Left lung (tissue), 14 donors: ENCODE measurements at regions of chr18 and their contacts with region 1.

Region 1: DNA sequence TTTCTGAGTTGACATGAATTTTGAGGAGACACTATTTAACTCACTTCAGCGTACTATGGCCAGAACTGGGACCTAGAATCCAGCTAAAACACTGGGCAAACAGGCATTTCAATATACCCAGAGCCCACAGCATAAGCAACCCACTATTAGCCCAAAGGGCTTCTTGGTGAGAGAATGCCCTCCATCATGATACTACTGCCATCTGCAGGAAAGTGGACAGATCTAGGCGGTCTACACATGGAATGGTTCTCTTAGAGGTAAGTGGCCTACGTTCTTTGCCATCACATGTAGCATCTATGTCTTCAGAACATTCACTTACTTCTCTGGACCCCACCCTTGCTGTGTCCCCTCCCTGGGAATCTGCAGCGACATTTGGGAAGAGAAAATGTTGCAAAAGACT is 181.3 kb upstream of the LINC00305 start:
- DNase-seq: no peak
- ATAC-seq: no peak
- H3K4me3 ChIP-seq: no peak overlapping the region
- H3K27ac ChIP-seq: no peak overlapping the region
- H3K4me1 ChIP-seq: no peaks in the 10 kb centered on the region
- H3K27me3 ChIP-seq: no peaks in the 10 kb centered on the region
- CTCF ChIP-seq: no peak

Region 2: DNA sequence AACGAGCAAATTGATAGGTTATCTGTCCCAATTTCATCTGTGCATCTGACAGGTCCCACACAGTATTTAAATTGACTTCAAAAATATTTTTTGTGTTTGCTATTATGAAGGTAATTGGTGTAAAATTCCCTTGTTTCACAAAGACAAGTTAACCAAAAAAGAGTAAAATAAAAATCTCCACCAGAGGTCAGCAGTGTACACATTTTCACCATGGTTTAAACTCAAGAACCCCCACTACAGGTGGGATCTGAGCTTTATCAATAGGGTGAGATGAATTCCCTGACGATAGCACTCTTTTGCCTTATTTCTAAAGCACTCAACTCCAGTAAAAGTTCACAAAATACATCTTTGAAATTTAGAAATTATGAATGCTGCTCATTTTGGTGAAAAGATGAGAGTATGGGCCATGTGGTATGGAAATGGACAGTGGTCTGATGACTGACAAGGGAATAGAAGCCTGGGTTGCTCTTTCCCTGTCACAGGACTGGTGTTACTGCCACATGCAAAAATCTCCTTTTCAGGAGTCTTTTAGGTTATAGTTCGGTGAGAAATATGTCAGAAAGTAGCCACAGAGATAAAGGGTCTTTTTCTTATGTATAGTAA is 292.2 kb before region 1 on chr18:
- intact Hi-C with region 1: no loop called
- DNase-seq: peak in 1 of 4 donors; percentile 14
- ATAC-seq: no peak
- H3K4me3 ChIP-seq: no peak overlapping the region
- H3K27ac ChIP-seq: no peak overlapping the region
- H3K4me1 ChIP-seq: no peaks in the 10 kb centered on the region
- H3K27me3 ChIP-seq: no peaks in the 10 kb centered on the region
- CTCF ChIP-seq: peak in 1 of 2 donors; percentile 45

Region 3: DNA sequence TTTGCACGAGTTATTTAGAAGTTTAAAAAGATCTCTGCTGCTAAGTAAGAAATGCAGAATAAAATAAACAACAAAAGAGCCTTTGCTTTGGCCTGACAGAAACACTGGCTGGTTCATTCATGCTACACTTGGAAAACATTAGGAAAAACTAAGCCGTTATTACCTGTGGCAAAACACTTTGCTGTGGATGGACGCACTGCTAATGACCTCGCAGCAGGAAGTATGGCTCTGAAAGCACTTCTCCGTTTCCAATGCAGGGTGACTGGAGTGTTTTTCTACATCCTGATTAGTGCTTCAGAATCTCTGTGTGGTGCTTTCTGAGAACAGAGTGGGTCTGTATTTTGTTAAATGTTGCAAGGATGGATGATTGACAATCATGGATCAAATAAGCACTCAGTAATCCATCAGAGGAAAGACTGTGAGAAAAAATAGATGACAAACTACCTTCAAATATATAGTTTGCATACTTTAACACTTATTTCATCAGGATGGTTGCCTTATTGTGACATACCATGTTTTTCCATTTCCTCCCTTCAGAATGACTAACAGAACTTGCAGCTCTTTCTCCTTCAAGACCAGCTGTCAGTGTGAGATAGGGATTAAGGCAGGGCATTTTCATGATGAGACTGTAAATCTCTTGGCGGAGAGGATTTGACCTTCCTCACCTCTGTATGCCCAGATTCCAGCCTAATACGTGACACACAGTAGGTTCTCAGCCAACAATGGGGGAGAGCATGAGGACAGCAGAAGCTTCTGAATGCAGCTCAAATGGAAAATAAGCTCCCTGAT is 219.3 kb before region 1 on chr18:
- intact Hi-C with region 1: no loop called
- DNase-seq: no peak
- ATAC-seq: no peak
- H3K4me3 ChIP-seq: no peak overlapping the region
- H3K27ac ChIP-seq: no peak overlapping the region
- H3K4me1 ChIP-seq: no peaks in the 10 kb centered on the region
- H3K27me3 ChIP-seq: no peaks in the 10 kb centered on the region
- CTCF ChIP-seq: no peak

Region 4: GRCh38 chr18:64287926-64288325 is 42.2 kb before region 1 on chr18:
- intact Hi-C with region 1: loop called in 1 of 2 experiments (anchors 5 kb)
- DNase-seq: no peak
- ATAC-seq: no peak
- H3K4me3 ChIP-seq: no peak overlapping the region
- H3K27ac ChIP-seq: no peak overlapping the region
- H3K4me1 ChIP-seq: no peaks in the 10 kb centered on the region
- H3K27me3 ChIP-seq: no peaks in the 10 kb centered on the region
- CTCF ChIP-seq: no peak